IMR-90 (cell line): ENCODE measurements at regions of chr10 and their contacts with region 1.

Region 1: GRCh38 chr10:87931836-87932230 is 68.4 kb downstream of the PTEN start:
- DNase-seq: peak; percentile 60
- ATAC-seq: 0 out of 2 replicates have a peak, but pooled peaks have one; percentile 9
- H3K4me3 ChIP-seq: no peak overlapping the region
- H3K27ac ChIP-seq: no peak overlapping the region
- H3K4me1 ChIP-seq: peaks cover 3% of the 10 kb centered on the region; the same call in 1 of the 2 replicates
- H3K27me3 ChIP-seq: no peaks in the 10 kb centered on the region
- CTCF ChIP-seq: no peak
- POLR2A ChIP-seq: no peak
- RAD21 ChIP-seq: no peak

Region 2: GRCh38 chr10:87740232-87740631 is 191.6 kb before region 1 on chr10:
- CTCF ChIA-PET with region 1: no interaction called
- POLR2A ChIA-PET with region 1: no interaction called
- dilution Hi-C with region 1: no loop called
- in situ Hi-C with region 1: no loop called
- intact Hi-C with region 1: no loop called
- DNase-seq: peak; percentile 85
- ATAC-seq: peak; percentile 54
- H3K4me3 ChIP-seq: no peak overlapping the region
- H3K27ac ChIP-seq: no peak overlapping the region
- H3K4me1 ChIP-seq: no peaks in the 10 kb centered on the region
- H3K27me3 ChIP-seq: no peaks in the 10 kb centered on the region
- CTCF ChIP-seq: no peak
- POLR2A ChIP-seq: no peak
- RAD21 ChIP-seq: no peak

Region 3: GRCh38 chr10:87895430-87895829 is 36.4 kb before region 1 on chr10:
- CTCF ChIA-PET with region 1: no interaction called
- POLR2A ChIA-PET with region 1: no interaction called
- dilution Hi-C with region 1: no loop called
- in situ Hi-C with region 1: no loop called
- intact Hi-C with region 1: loop called (anchors 5 kb)
- DNase-seq: no peak
- ATAC-seq: no peak
- H3K4me3 ChIP-seq: no peak overlapping the region
- H3K27ac ChIP-seq: no peak overlapping the region
- H3K4me1 ChIP-seq: peaks cover 5% of the 10 kb centered on the region
- H3K27me3 ChIP-seq: no peaks in the 10 kb centered on the region
- CTCF ChIP-seq: no peak
- POLR2A ChIP-seq: no peak
- RAD21 ChIP-seq: no peak